ENCODE measurements at regions of chr18 and their contacts with region 1.

Region 1: DNA sequence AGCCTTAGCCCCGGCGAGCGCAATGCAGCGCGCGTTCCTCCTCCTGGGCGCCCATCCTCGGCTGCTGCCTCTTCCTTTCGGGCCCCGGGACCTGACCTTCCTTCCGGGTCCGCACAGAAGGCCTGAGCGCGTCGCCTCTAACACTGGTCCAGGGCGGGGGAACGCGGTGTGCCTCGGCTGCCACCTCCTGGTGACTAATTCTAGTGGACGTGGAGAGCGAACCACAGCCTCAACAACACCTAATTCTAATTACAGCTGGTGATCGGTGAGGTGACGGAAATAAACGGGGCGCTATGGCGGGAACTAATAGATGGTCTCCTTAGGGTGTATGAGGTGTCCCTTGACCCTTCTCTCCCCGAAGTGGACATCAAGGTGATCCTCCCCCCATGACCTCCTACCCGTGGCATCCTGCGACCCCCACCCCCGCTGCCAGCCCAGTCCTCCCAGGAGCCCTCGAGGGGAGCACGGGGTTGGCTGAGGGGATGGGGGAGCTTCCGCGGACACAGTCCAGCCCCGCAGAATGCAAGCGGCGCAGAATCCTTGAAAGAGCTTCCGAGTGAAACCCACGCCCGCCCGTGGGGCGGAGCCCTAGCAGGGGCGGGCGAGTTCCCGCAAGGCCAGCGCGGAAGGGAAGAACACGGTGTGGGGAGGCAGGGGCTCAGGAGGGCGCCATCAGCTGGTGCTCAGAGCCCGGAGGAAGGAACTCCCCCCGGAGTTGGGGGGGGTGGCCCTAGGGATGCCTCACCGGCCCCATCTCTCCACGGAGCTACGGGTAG is 12.8 kb upstream of the HMSD start:
- DNase-seq: peak; percentile 77
- ATAC-seq: peak; percentile 89
- H3K4me3 ChIP-seq: peak overlapping the region; percentile 32 to 73 (median 65)
- H3K4me3 Mint-ChIP-seq: no peak overlapping the region
- H3K27ac ChIP-seq: peak overlapping the region in 1 of 2 donors; percentile 7
- H3K27ac Mint-ChIP-seq: no peak overlapping the region
- H3K4me1 ChIP-seq: peaks cover 11 to 14% of the 10 kb centered on the region in 2 donors
- H3K4me1 Mint-ChIP-seq: peaks cover 5% of the 10 kb centered on the region
- H3K27me3 ChIP-seq: peaks cover 0 to 17% (median 4%) of the 10 kb centered on the region in 4 experiments
- H3K27me3 Mint-ChIP-seq: peaks cover 4% of the 10 kb centered on the region
- CTCF ChIP-seq: peak; percentile 69

Region 2: GRCh38 chr18:63823518-63824219 is 112.7 kb before region 1 on chr18:
- CTCF ChIA-PET with region 1: interaction called, 11 read pairs
- POLR2A ChIA-PET with region 1: no interaction called
- intact Hi-C with region 1: loop called (anchors 5 kb)
- DNase-seq: peak; percentile 17
- ATAC-seq: no peak
- H3K4me3 ChIP-seq: no peak overlapping the region
- H3K4me3 Mint-ChIP-seq: no peak overlapping the region
- H3K27ac ChIP-seq: no peak overlapping the region
- H3K27ac Mint-ChIP-seq: no peak overlapping the region
- H3K4me1 ChIP-seq: no peaks in the 10 kb centered on the region
- H3K4me1 Mint-ChIP-seq: no peaks in the 10 kb centered on the region
- H3K27me3 ChIP-seq: peaks cover 0 to 8% (median 4%) of the 10 kb centered on the region in 4 experiments
- H3K27me3 Mint-ChIP-seq: peaks cover 18% of the 10 kb centered on the region
- CTCF ChIP-seq: peak; percentile 14

Region 3: DNA sequence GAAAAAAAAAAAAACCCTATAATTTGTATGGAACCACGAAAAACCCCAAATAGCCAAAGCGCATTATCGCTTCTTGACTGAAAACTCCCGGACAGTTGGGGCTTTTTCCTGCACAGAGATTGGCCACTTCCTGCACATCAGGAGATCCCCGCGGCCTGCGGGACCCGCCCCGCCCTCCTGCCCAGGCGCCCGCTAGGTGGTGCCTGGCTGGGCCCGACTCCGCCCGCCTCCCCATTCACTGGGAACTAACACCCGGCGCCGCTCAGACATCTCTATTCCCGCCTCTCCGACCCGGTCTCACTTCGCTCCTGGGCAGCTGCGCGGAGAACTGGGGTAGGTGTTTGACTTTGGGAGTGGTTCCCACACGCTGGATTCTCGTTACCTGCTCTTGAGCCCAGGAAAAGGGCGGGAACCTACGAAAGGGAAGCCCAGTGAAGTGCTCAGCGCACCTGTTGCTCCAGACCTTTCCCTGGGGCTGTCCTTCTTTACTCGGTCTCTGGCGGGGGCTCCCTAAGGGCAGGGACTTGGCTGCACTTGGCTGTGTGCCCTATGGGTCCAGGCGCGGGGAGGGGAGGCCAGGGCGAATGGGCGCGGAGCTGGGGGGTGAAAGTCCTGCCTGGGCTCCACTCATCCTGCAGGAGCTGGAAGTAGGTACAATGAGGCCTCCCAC is 12.9 kb after region 1 on chr18 and contains the start of gene HMSD:
- CTCF ChIA-PET with region 1: interaction called, 4 read pairs
- POLR2A ChIA-PET with region 1: no interaction called
- intact Hi-C with region 1: loop called (anchors 1 kb)
- DNase-seq: peak; percentile 70
- ATAC-seq: peak; percentile 92
- H3K4me3 ChIP-seq: peak within 1 kb of the TSS in 4 of 5 experiments; percentile 22 to 59 (median 47)
- H3K4me3 Mint-ChIP-seq: peak within 1 kb of the TSS; percentile 76
- H3K27ac ChIP-seq: no peak within 1 kb of the TSS
- H3K27ac Mint-ChIP-seq: no peak within 1 kb of the TSS
- H3K4me1 ChIP-seq: peaks cover 8% of the 10 kb centered on the region in 2 donors
- H3K4me1 Mint-ChIP-seq: peaks cover 19% of the 10 kb centered on the region
- H3K27me3 ChIP-seq: peaks cover 0 to 10% (median 4%) of the 10 kb centered on the region in 4 experiments
- H3K27me3 Mint-ChIP-seq: peaks cover 22% of the 10 kb centered on the region
- CTCF ChIP-seq: peak; percentile 53
- total RNA-seq, gene HMSD: not detected in 2 replicates

Region 4: GRCh38 chr18:63963615-63964256 is 27.4 kb after region 1 on chr18:
- CTCF ChIA-PET with region 1: interaction called, 27 read pairs
- POLR2A ChIA-PET with region 1: no interaction called
- intact Hi-C with region 1: no loop called
- DNase-seq: peak; percentile 72
- ATAC-seq: peak; percentile 63
- H3K4me3 ChIP-seq: no peak overlapping the region
- H3K4me3 Mint-ChIP-seq: no peak overlapping the region
- H3K27ac ChIP-seq: no peak overlapping the region
- H3K27ac Mint-ChIP-seq: no peak overlapping the region
- H3K4me1 ChIP-seq: no peaks in the 10 kb centered on the region
- H3K4me1 Mint-ChIP-seq: no peaks in the 10 kb centered on the region
- H3K27me3 ChIP-seq: no peaks in the 10 kb centered on the region
- H3K27me3 Mint-ChIP-seq: peaks cover 4% of the 10 kb centered on the region
- CTCF ChIP-seq: peak; percentile 89

Region 5: DNA sequence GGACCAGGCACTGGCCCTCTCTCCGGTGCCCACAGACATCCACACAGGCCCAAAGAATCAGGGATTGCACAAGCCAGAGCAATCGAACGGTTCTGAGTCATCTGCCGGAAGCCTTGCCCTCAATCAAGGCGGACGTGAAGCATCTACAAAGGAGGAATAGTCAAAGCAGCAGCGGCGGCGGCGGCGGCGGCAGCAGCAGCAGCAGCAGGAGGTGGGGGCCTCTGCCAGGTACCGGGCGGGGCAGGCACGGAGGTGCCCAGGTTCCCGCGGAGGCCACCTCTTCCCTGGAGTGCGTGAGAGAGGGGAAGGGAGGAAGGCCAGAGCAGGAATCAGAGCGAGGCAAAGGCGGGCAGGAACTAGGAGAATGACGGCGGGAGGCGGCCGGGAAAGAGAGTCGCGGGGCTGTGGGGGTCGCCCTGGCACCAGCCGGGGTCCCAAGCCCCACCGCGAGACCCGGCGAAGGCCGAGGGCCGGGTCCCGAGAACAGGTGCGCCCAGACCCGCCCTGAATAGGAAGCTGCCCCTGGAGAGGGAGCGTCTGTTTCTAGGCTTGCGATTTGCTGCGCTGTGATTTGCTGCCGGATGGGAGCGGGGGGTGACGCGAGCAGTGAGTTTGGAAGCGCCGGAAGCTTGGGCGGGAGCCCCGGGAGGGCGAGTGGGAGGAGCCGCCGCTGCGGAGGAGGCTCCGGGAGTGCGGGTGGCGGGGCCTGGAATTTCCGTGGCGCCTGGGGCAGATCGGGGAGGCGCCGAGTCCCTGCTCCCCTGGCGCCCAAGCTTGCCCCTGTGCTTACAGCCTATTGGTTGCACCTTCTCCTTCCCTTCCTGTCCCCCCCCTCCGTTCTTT is 33.8 kb after region 1 on chr18 and contains the start of gene SERPINB8:
- CTCF ChIA-PET with region 1: interaction called, 5 read pairs
- POLR2A ChIA-PET with region 1: no interaction called
- intact Hi-C with region 1: loop called (anchors 5 kb)
- DNase-seq: peak; percentile 77
- ATAC-seq: peak; percentile 84
- H3K4me3 ChIP-seq: peak within 1 kb of the TSS; percentile 57 to 98 (median 81)
- H3K4me3 Mint-ChIP-seq: peak within 1 kb of the TSS; percentile 93
- H3K27ac ChIP-seq: peak within 1 kb of the TSS; percentile 91 to 95
- H3K27ac Mint-ChIP-seq: peak within 1 kb of the TSS; percentile 96
- H3K4me1 ChIP-seq: peaks cover 28 to 33% of the 10 kb centered on the region in 2 donors
- H3K4me1 Mint-ChIP-seq: peaks cover 51% of the 10 kb centered on the region
- H3K27me3 ChIP-seq: no peaks in the 10 kb centered on the region
- H3K27me3 Mint-ChIP-seq: no peaks in the 10 kb centered on the region
- CTCF ChIP-seq: no peak
- total RNA-seq, gene SERPINB8: 22.1 and 26.2 TPM in 2 replicates

Measured in B cell (primary cell).